MCF 10A (cell line): ENCODE measurements at regions of chr1 and their contacts with region 1.

Region 1: DNA sequence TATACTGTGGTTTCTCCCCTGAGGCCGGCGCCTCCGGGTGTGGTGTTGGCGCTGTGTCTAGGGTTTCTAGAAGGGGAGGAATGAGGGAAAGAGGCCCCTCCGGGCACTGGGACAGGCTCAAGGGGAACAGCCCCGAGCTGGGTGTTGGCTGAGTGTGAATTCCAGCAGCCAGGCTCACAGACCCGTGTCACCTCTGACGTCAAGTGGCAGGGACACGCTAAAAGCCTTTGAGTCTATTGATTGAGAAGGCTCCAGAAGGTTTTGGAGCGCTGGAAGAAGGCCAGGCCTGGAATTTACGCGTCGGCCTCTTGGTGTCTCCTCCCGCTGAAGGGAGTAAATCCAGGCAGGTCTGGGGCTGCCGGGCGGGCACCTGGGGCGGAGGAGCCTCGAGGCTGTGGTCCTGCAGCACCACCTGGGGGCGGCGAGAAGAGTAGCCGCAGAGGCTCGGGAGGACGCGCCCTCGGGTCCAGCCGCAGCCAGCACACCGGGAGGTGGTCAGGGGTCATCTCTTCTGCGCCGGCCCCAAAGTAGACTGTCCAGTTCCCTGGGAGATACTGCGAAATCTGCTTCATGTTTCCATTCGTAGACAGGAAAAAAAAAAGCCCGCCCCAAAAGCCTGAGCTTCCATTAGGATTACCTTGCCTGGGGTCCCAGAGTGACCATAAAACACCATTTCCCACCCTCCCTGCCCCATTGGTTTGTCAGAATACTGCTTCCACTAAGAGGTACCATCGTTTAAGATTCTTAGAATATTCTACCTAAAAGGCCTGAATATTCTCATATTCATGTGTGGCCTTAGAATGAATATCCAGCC is 61.7 kb downstream of the TLR5 start:
- DNase-seq: peak; percentile 100
- H3K4me3 Mint-ChIP-seq: peak overlapping the region; percentile 59
- H3K27ac Mint-ChIP-seq: peak overlapping the region; percentile 96
- H3K4me1 Mint-ChIP-seq: no peaks in the 10 kb centered on the region
- H3K27me3 Mint-ChIP-seq: peaks cover 33% of the 10 kb centered on the region
- CTCF ChIP-seq: peak; percentile 100

Region 2: DNA sequence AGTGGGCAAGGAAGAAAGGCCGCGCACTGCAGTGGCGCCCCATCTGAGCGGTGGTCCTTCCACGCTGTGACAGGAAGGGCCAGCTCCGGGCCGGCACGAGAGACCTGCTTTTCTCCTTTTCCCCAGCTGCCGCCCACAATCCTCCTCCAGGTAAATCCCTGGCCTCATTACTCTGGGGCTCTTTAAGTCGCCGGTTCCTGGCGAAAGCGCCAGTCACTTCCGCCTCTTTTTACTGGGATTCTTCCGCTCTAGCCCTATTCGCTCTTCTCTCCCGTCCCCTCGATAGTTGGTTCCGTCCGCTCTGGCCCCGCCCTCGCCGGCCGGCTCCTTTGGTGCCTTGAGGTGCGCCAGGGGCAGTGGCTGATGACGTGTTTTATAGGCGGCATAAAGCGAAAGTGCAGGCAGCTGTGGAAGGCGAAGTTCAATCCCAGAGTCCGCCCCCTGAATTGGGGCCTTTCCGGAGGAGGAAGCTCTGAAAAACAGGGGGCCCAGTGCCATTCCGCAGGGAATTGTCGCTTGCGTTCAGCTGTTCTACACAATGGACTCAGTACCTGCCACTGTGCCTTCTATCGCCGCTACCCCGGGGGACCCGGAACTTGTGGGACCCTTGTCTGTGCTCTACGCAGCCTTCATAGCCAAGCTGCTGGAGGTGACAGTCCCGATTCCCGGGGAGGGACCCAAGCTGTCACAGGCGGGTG is 437.3 kb before region 1 on chr1:
- CTCF ChIA-PET with region 1: no interaction called
- POLR2A ChIA-PET with region 1: no interaction called
- intact Hi-C with region 1: loop called (anchors 5 kb)
- DNase-seq: peak; percentile 100
- H3K4me3 Mint-ChIP-seq: peak overlapping the region; percentile 85
- H3K27ac Mint-ChIP-seq: peak overlapping the region; percentile 97
- H3K4me1 Mint-ChIP-seq: peaks cover 10% of the 10 kb centered on the region
- H3K27me3 Mint-ChIP-seq: no peaks in the 10 kb centered on the region
- CTCF ChIP-seq: no peak

Region 3: GRCh38 chr1:222739465-222739864 is 341.9 kb before region 1 on chr1:
- CTCF ChIA-PET with region 1: interaction called, 86 read pairs
- POLR2A ChIA-PET with region 1: interaction called, 4 read pairs
- intact Hi-C with region 1: loop called (anchors 1 kb)
- DNase-seq: no peak
- H3K4me3 Mint-ChIP-seq: no peak overlapping the region
- H3K27ac Mint-ChIP-seq: no peak overlapping the region
- H3K4me1 Mint-ChIP-seq: no peaks in the 10 kb centered on the region
- H3K27me3 Mint-ChIP-seq: no peaks in the 10 kb centered on the region
- CTCF ChIP-seq: no peak

Region 4: DNA sequence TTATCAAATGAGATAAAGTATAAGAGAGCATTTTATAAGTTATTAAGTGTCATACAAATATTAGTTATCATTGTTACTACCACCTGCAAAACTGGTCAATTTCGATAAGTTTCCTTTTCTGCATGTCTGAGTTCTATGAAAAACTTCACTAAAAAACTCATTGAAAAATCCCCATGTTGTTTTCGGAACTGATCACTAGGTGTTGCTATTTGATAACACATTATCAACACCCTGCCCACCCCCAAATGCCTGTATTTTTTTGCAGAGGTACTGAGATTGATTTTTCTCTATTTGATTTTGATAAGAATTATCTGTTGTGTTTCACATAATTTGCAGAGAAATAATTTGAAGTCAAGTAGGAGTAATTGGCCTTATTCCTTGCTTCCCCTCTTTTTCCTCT is 288.6 kb before region 1 on chr1:
- CTCF ChIA-PET with region 1: interaction called, 488 read pairs
- POLR2A ChIA-PET with region 1: interaction called, 3 read pairs
- intact Hi-C with region 1: loop called (anchors 1 kb)
- DNase-seq: peak; percentile 56
- H3K4me3 Mint-ChIP-seq: no peak overlapping the region
- H3K27ac Mint-ChIP-seq: no peak overlapping the region
- H3K4me1 Mint-ChIP-seq: peaks cover 18% of the 10 kb centered on the region
- H3K27me3 Mint-ChIP-seq: peaks cover 8% of the 10 kb centered on the region
- CTCF ChIP-seq: peak; percentile 81

Region 5: GRCh38 chr1:223062177-223062576 is 19.2 kb before region 1 on chr1:
- CTCF ChIA-PET with region 1: interaction called, 14 read pairs
- POLR2A ChIA-PET with region 1: interaction called, 3 read pairs
- intact Hi-C with region 1: no loop called
- DNase-seq: peak; percentile 51
- H3K4me3 Mint-ChIP-seq: no peak overlapping the region
- H3K27ac Mint-ChIP-seq: no peak overlapping the region
- H3K4me1 Mint-ChIP-seq: no peaks in the 10 kb centered on the region
- H3K27me3 Mint-ChIP-seq: peaks cover 14% of the 10 kb centered on the region
- CTCF ChIP-seq: no peak